ENCODE measurements at regions of chr12 and their contacts with region 1.

Region 1: GRCh38 chr12:14995583-14996425 is 23.0 kb downstream of the PDE6H start:
- DNase-seq: no peak
- CTCF ChIP-seq: peak; percentile 48

Region 2: DNA sequence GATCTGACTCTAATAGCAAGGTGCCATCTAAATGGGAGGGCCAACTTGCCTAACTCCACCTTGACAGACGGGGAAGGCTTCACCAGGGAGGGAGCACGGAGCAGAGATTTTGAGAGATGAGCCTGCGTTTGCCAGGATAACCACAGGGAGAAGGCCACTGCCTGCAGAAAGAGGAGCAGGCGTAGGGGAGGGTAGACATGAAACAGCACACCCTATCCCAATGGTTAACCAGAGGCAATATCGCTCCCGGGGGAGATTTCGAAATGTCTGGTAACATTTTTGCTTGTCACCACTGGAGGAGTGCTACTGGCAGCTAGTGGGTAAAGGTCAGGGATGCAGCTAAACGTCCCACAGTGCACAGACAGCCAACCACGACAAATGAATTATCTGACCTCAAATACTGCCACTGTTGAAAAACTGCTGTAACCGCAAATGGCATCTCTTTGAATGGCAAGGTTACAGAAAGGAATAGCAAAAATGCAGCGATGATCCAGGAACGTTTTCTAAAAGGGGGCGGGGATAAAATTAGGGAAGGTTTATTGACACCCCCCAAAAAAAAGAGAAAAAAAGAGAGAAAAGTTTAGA is 756.4 kb before region 1 on chr12:
- in situ Hi-C with region 1: loop called (anchors 25 kb)
- DNase-seq: peak; percentile 52
- CTCF ChIP-seq: peak; percentile 10

Region 3: GRCh38 chr12:14723763-14724162 is 272.0 kb before region 1 on chr12:
- in situ Hi-C with region 1: loop called (anchors 10 kb)
- DNase-seq: peak; percentile 59
- CTCF ChIP-seq: peak; percentile 61

Region 4: DNA sequence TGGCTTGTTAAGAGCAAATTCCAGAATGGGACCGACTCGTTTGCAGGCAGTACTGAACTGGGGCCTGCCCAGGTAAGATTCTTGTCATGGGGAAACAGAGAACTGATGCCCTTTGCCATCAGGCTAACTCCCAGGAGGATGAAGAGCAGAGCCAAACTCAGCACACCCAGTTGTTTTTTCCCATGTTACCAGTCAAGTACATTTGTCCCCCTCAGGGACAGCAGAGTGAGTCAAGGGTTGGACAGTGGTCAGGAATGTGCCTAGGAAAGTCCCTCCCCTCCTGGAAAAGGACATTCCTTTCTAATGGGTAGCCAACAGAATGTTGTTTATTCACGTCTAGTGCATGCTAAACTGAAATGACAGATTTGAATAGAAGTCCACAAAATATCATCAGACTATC is 154.0 kb before region 1 on chr12:
- in situ Hi-C with region 1: loop called (anchors 5 kb)
- DNase-seq: no peak
- CTCF ChIP-seq: no peak

Region 5: GRCh38 chr12:15050659-15051058 is 54.9 kb after region 1 on chr12:
- in situ Hi-C with region 1: no loop called
- DNase-seq: no peak
- CTCF ChIP-seq: no peak

Measured in GM13976 (cell line).